Activated naive CD4-positive, alpha-beta T cell treated with anti-CD3 and anti-CD28 coated beads for 36 hours (primary cell): ENCODE measurements at regions of chr20 and their contacts with region 1.

Region 1: GRCh38 chr20:1266167-1266973 is at the start of gene SNPH:
- DNase-seq: peak; percentile 85
- H3K4me3 Mint-ChIP-seq: peak within 1 kb of the TSS; percentile 90
- H3K27ac Mint-ChIP-seq: peak within 1 kb of the TSS; percentile 85
- H3K4me1 Mint-ChIP-seq: peaks cover 53% of the 10 kb centered on the region
- H3K27me3 Mint-ChIP-seq: no peaks in the 10 kb centered on the region
- total RNA-seq, gene SNPH: 6.7 to 7.3 TPM

Region 2: GRCh38 chr20:844473-845225 is 421.7 kb before region 1 on chr20:
- CTCF ChIA-PET with region 1: no interaction called
- intact Hi-C with region 1: loop called (anchors 5 kb)
- DNase-seq: peak; percentile 95
- H3K4me3 Mint-ChIP-seq: peak overlapping the region; percentile 75
- H3K27ac Mint-ChIP-seq: peak overlapping the region; percentile 41
- H3K4me1 Mint-ChIP-seq: peaks cover 43% of the 10 kb centered on the region
- H3K27me3 Mint-ChIP-seq: no peaks in the 10 kb centered on the region

Region 3: GRCh38 chr20:1225783-1226654 is 40.4 kb before region 1 on chr20 and contains the start of gene RAD21L1:
- CTCF ChIA-PET with region 1: interaction called, 3 read pairs
- intact Hi-C with region 1: loop called (anchors 2 kb)
- DNase-seq: peak; percentile 88
- H3K4me3 Mint-ChIP-seq: peak within 1 kb of the TSS; percentile 83
- H3K27ac Mint-ChIP-seq: no peak within 1 kb of the TSS
- H3K4me1 Mint-ChIP-seq: peaks cover 10% of the 10 kb centered on the region
- H3K27me3 Mint-ChIP-seq: peaks cover 6% of the 10 kb centered on the region
- total RNA-seq, gene RAD21L1: not detected

Region 4: GRCh38 chr20:1277529-1278322 is 11.4 kb after region 1 on chr20:
- CTCF ChIA-PET with region 1: interaction called, 6 read pairs
- intact Hi-C with region 1: loop called (anchors 1 kb)
- DNase-seq: no peak
- H3K4me3 Mint-ChIP-seq: no peak overlapping the region
- H3K27ac Mint-ChIP-seq: no peak overlapping the region
- H3K4me1 Mint-ChIP-seq: peaks cover 40% of the 10 kb centered on the region
- H3K27me3 Mint-ChIP-seq: no peaks in the 10 kb centered on the region

Region 5: GRCh38 chr20:1291191-1291741 is 24.9 kb after region 1 on chr20:
- CTCF ChIA-PET with region 1: interaction called, 3 read pairs
- intact Hi-C with region 1: loop called (anchors 2 kb)
- DNase-seq: no peak
- H3K4me3 Mint-ChIP-seq: no peak overlapping the region
- H3K27ac Mint-ChIP-seq: no peak overlapping the region
- H3K4me1 Mint-ChIP-seq: peaks cover 54% of the 10 kb centered on the region
- H3K27me3 Mint-ChIP-seq: no peaks in the 10 kb centered on the region